Ascending aorta (tissue), 2 donors: ENCODE measurements at regions of chr11 and their contacts with region 1.

Region 1: DNA sequence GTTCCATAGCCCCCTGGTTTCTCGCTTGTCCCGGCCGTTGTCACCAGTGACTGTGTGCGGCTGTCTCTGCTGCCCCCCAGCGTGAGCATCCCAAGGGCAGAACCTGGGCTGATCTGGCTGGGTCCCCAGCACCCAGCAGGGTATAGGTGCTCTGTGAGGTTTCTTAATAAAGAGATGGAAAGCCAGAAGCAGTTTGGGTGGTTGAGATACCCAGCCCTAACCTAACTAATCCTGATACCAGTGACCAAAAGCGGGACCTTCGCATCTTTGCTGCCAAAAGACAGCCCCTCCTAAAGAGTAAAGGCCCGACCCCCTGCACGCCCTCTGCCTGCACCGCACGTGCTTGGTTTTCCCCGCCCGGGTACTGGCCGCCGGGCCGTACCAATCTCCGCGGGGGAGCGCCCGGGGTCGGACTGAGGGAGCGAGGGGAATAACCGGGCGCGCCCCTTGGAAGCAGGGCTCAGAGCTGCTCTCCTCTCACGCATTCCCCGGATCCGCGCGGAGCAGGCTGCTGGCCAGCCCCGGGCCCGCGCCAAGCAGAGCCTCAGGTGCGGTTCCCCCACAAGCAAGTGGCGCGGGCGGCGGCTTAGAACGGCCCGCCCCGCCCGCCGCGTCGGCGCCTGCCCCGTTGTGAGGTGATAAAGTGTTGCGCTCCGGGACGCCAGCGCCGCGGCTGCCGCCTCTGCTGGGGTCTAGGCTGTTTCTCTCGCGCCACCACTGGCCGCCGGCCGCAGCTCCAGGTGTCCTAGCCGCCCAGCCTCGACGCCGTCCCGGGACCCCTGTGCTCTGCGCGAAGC is at the start of gene DGAT2:
- DNase-seq: peak in 1 of 2 donors; percentile 81
- H3K4me3 ChIP-seq: peak within 1 kb of the TSS; percentile 66 to 69
- H3K27ac ChIP-seq: peak within 1 kb of the TSS in 1 of 2 donors; percentile 31
- H3K4me1 ChIP-seq: peaks cover 9 to 13% of the 10 kb centered on the region in 2 donors
- H3K27me3 ChIP-seq: no peaks in the 10 kb centered on the region
- CTCF ChIP-seq: peak; percentile 7 to 47 (median 30)
- total RNA-seq, gene DGAT2: 26.2 TPM

Region 2: GRCh38 chr11:75706260-75706729 is 62.0 kb before region 1 on chr11:
- intact Hi-C with region 1: loop called (anchors 5 kb)
- DNase-seq: peak in 1 of 2 donors; percentile 77
- H3K4me3 ChIP-seq: peak overlapping the region in 1 of 2 donors; percentile 24
- H3K27ac ChIP-seq: no peak overlapping the region
- H3K4me1 ChIP-seq: no peaks in the 10 kb centered on the region
- H3K27me3 ChIP-seq: no peaks in the 10 kb centered on the region
- CTCF ChIP-seq: peak; percentile 81 to 97 (median 88)